Prostate gland (tissue), 2 donors: ENCODE measurements at regions of chr1 and their contacts with region 1.

Region 1: DNA sequence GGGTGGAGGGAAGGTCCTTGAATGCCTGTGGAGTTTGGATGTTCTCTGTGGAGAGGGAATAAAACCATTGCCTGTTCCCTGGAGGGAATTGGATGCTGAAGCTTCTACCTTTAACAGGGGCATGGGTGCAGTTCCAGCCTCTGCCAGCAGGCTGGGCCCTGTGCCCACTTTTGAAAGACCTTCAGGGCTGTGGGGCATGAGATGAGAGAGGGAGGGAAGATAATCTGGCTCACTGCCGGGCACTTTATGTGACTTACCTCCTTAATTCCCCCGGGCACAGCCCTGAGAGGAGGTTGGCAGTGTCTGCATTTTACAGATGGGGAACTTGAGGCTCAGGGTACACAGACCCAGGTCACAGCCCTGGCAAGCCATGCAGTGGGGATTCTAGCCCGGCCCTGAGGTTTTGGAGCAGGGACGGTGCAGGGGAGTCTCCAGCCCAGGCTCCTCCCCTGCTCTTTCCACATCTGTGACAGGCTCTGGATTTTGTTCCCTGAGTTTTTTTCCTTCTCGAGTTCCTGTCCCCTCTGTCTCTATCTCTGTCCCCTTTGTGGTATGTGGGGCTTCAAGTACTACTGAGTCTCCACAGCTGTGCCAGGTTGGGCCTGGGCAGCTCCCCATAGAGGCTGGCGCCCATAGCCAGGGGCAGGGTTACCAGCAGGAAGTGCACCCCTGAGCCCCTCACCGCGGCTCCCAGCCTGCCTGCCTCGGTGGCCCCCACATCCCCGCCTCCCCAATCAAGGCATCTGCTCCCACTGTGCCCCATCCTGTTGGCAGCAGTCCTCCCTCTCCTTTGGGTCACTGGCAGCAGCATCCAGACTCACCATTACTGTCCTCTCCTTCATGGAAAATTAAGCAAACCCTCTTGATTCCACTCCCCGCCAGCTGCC is 14.0 kb upstream of the THEMIS2 start:
- DNase-seq: peak; percentile 79
- H3K4me3 ChIP-seq: no peak overlapping the region
- H3K27ac ChIP-seq: no peak overlapping the region
- H3K4me1 ChIP-seq: no peaks in the 10 kb centered on the region
- H3K27me3 ChIP-seq: no peaks in the 10 kb centered on the region
- CTCF ChIP-seq: peak; percentile 76 to 95 (median 85)
- POLR2A ChIP-seq: no peak

Region 2: DNA sequence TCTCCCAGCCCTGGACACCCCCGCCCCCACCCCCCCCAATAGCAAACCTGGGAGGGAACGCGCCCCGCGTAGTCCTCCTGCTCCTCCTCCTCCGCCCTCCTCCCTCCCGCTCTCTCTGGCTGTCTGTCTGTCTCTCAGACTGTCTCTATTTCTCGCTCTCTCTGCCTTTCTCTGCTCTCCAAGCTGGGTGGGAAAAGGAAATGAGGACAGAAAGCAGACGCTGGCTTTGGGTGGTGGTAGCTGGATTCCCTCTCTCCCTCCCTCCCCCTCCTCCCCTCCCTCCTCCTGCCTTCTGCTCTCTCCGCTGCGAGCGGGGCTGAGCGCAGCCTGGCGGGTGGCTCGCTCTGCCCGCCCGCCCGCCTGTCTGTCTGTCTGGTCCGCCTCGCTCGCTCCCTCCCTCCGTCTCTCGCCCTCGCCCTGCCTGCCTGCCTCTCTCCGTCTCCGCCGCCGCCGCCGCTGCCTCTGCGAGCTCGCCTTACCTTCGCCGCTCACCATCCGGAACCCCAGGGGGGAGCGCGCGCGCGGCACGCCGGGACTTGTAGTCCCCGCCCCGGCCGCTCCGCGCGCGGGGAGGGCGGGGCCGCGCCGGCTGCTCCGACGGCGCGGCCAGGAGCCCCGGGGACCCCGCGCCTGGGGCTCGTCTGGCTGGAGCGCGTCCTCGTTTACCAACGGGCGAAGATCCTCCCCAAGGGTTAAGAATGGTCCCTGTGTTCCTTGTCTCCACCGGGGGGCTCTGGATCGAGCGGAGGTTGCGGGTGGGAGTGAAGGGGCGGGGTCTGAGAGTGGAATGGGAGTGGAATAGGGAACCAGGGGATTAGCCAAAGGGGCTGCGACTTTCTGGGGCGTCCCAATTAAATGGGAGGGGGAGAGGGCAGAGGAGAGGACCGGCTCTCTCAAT is 254.4 kb before region 1 on chr1 and contains the start of gene AHDC1:
- intact Hi-C with region 1: no loop called
- DNase-seq: peak; percentile 94
- H3K4me3 ChIP-seq: peak within 1 kb of the TSS; percentile 76 to 90
- H3K27ac ChIP-seq: peak within 1 kb of the TSS; percentile 93 to 96
- H3K4me1 ChIP-seq: peaks cover 9% of the 10 kb centered on the region
- H3K27me3 ChIP-seq: no peaks in the 10 kb centered on the region
- CTCF ChIP-seq: peak; percentile 19 to 61 (median 48)
- POLR2A ChIP-seq: peak; percentile 95
- total RNA-seq, gene AHDC1: 27.1 to 83.7 TPM

Region 3: DNA sequence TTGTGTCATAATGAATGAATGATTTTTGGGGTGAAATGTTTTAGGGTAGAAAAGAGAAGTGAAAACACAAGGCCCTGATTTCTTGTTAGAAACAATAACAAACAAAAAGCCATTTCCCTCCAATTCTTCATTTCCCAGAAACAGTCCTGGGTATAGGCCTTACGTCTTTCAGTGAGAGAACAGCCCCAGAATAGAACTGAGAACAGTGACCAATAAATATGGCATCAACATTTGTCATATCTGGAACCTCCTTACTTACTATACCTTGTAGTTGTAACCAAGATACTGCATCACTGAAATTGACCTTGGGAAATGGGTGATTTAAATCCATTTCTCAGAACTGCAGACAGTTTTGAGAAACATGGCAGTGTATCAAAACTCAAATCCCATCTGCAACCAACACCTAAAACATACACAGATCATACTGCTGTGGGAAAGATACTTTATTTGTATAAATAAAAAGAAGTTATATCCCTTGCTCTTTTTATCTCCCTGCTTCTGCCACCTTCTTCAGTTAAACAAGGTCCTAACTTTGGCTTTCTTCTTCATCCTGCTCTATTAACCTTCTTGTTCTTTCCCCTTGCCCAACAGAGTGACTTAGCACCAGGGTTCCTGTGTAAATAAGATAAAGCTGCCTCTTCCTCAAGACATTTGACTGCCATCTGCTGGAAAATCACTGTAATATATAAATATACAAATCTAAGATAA is 121.0 kb after region 1 on chr1:
- intact Hi-C with region 1: loop called (anchors 5 kb)
- DNase-seq: no peak
- H3K4me3 ChIP-seq: no peak overlapping the region
- H3K27ac ChIP-seq: no peak overlapping the region
- H3K4me1 ChIP-seq: no peaks in the 10 kb centered on the region
- H3K27me3 ChIP-seq: no peaks in the 10 kb centered on the region
- CTCF ChIP-seq: peak in 3 of 4 experiments; percentile 62 to 75 (median 73)
- POLR2A ChIP-seq: no peak

Region 4: GRCh38 chr1:28031173-28031572 is 172.9 kb after region 1 on chr1:
- intact Hi-C with region 1: no loop called
- DNase-seq: no peak
- H3K4me3 ChIP-seq: no peak overlapping the region
- H3K27ac ChIP-seq: no peak overlapping the region
- H3K4me1 ChIP-seq: no peaks in the 10 kb centered on the region
- H3K27me3 ChIP-seq: no peaks in the 10 kb centered on the region
- CTCF ChIP-seq: no peak
- POLR2A ChIP-seq: no peak

Region 5: DNA sequence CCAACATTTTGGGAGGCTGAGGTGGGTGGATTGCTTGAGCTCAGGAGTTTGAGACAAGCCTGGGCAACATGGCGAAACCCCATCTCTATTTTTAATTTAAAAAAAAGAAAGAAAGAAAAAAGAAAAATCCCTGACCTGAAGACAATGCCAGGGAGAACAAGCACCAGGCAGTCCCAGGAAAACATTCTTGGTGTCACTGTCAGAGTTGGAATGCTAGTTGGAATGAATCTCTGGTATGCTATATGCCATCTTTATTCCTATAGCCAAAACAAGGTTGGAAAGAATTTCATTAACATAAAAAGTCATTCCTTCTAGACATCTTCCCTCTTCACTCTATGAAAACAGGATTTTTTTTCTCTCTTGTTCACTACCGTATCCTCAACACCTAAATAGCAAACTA is 371.7 kb after region 1 on chr1:
- intact Hi-C with region 1: loop called (anchors 10 kb)
- DNase-seq: no peak
- H3K4me3 ChIP-seq: no peak overlapping the region
- H3K27ac ChIP-seq: no peak overlapping the region
- H3K4me1 ChIP-seq: no peaks in the 10 kb centered on the region
- H3K27me3 ChIP-seq: no peaks in the 10 kb centered on the region
- CTCF ChIP-seq: no peak
- POLR2A ChIP-seq: no peak